CD4-positive, alpha-beta T cell (primary cell): ENCODE measurements at regions of chr14 and their contacts with region 1.

Region 1: DNA sequence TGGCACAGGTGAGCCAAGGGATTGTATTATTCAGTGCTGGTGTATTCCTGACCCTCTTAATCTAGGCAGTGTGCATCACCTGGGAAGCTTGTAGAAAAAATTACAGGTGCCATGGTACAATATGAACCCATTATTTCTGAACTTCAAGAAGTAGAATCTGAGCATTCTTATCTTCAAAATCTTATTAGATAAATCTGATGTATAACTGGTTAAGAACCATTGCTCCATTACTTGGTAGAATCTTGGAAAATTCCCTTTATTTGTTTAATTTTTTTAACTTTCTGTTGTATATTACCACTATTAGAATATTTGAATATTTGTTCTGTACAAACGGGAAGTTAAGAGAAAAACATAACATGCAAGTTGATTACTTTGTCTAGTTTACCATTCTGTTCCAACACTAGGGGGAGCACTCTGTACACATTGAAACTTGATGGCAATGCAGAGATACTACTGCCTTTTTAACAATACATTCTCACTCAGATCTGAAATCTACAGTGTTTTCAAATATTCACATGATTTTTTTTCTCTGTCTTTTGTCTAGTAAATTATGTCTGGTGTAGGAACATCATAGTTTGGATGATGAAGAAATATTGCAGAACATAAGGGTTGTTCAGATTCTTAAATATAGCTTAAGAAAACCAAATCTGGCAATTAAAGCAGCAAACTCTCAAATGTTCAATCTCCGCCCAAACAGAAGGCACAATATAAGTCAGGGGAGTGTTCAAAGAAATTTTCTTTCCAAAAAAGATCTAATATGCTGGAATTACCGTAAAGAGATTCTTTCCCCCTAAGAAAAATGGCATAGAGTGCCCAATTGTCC is 196.6 kb downstream of the PCNX1 start:
- DNase-seq: peak in 4 of 14 experiments; percentile 19 to 69 (median 63)
- ATAC-seq: peak; percentile 51
- H3K4me3 ChIP-seq: no peak overlapping the region
- H3K4me3 Mint-ChIP-seq: no peak overlapping the region
- H3K27ac ChIP-seq: no peak overlapping the region
- H3K27ac Mint-ChIP-seq: no peak overlapping the region
- H3K4me1 ChIP-seq: no peaks in the 10 kb centered on the region
- H3K4me1 Mint-ChIP-seq: peaks cover 20% of the 10 kb centered on the region
- H3K27me3 ChIP-seq: no peaks in the 10 kb centered on the region
- H3K27me3 Mint-ChIP-seq: no peaks in the 10 kb centered on the region
- CTCF ChIP-seq: peak; percentile 94

Region 2: GRCh38 chr14:69937367-69938081 is 1166.3 kb before region 1 on chr14:
- CTCF ChIA-PET with region 1: no interaction called
- POLR2A ChIA-PET with region 1: no interaction called
- intact Hi-C with region 1: no loop called
- DNase-seq: no peak
- ATAC-seq: no peak
- H3K4me3 ChIP-seq: no peak overlapping the region
- H3K4me3 Mint-ChIP-seq: no peak overlapping the region
- H3K27ac ChIP-seq: no peak overlapping the region
- H3K27ac Mint-ChIP-seq: no peak overlapping the region
- H3K4me1 ChIP-seq: no peaks in the 10 kb centered on the region
- H3K4me1 Mint-ChIP-seq: no peaks in the 10 kb centered on the region
- H3K27me3 ChIP-seq: peaks cover 4 to 9% of the 10 kb centered on the region in 2 experiments
- H3K27me3 Mint-ChIP-seq: peaks cover 69% of the 10 kb centered on the region
- CTCF ChIP-seq: no peak

Region 3: DNA sequence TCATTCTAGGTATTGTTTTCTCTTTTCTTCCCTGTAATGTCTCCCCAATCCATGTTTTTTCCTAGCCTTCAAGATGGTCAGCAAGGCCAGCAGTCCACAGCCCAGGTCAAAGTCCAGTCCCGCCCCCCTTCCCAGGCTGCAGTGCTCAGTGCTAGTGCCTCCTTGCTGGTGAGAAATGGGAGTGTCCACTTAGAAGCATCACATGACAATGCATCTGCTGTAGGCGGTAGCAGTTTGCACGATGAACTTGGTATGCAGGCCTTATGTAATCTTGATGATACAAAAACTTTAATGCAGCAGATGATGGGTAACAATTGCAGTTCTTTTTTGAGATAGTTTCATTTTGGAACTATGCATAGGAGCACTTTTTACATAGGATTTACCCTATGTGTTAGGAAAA is 108.2 kb before region 1 on chr14:
- CTCF ChIA-PET with region 1: no interaction called
- POLR2A ChIA-PET with region 1: no interaction called
- intact Hi-C with region 1: no loop called
- DNase-seq: peak in 1 of 14 experiments; percentile 17
- ATAC-seq: no peak
- H3K4me3 ChIP-seq: no peak overlapping the region
- H3K4me3 Mint-ChIP-seq: peak overlapping the region; percentile 32
- H3K27ac ChIP-seq: no peak overlapping the region
- H3K27ac Mint-ChIP-seq: peak overlapping the region; percentile 70
- H3K4me1 ChIP-seq: peaks cover 15% of the 10 kb centered on the region
- H3K4me1 Mint-ChIP-seq: peaks cover 79% of the 10 kb centered on the region
- H3K27me3 ChIP-seq: no peaks in the 10 kb centered on the region
- H3K27me3 Mint-ChIP-seq: no peaks in the 10 kb centered on the region
- CTCF ChIP-seq: no peak

Region 4: GRCh38 chr14:71408362-71409030 is 304.6 kb after region 1 on chr14:
- CTCF ChIA-PET with region 1: no interaction called
- POLR2A ChIA-PET with region 1: no interaction called
- intact Hi-C with region 1: no loop called
- DNase-seq: no peak
- ATAC-seq: no peak
- H3K4me3 ChIP-seq: no peak overlapping the region
- H3K4me3 Mint-ChIP-seq: no peak overlapping the region
- H3K27ac ChIP-seq: no peak overlapping the region
- H3K27ac Mint-ChIP-seq: no peak overlapping the region
- H3K4me1 ChIP-seq: peaks cover 2% of the 10 kb centered on the region
- H3K4me1 Mint-ChIP-seq: peaks cover 36% of the 10 kb centered on the region
- H3K27me3 ChIP-seq: no peaks in the 10 kb centered on the region
- H3K27me3 Mint-ChIP-seq: no peaks in the 10 kb centered on the region
- CTCF ChIP-seq: no peak

Region 5: GRCh38 chr14:71753126-71753830 is 649.4 kb after region 1 on chr14:
- CTCF ChIA-PET with region 1: interaction called, 9 read pairs
- POLR2A ChIA-PET with region 1: interaction called, 3 read pairs
- intact Hi-C with region 1: loop called (anchors 1 kb)
- DNase-seq: peak; percentile 47 to 81 (median 62)
- ATAC-seq: no peak
- H3K4me3 ChIP-seq: no peak overlapping the region
- H3K4me3 Mint-ChIP-seq: no peak overlapping the region
- H3K27ac ChIP-seq: no peak overlapping the region
- H3K27ac Mint-ChIP-seq: no peak overlapping the region
- H3K4me1 ChIP-seq: peaks cover 6% of the 10 kb centered on the region
- H3K4me1 Mint-ChIP-seq: no peaks in the 10 kb centered on the region
- H3K27me3 ChIP-seq: no peaks in the 10 kb centered on the region
- H3K27me3 Mint-ChIP-seq: peaks cover 6% of the 10 kb centered on the region
- CTCF ChIP-seq: peak; percentile 92